CD4-positive, alpha-beta memory T cell (primary cell): ENCODE measurements at regions of chr1 and their contacts with region 1.

Region 1: GRCh38 chr1:27284425-27285273 is 37.3 kb upstream of the TMEM222 start:
- DNase-seq: peak; percentile 77 to 85 (median 81)
- H3K4me3 ChIP-seq: no peak overlapping the region
- H3K4me3 Mint-ChIP-seq: no peak overlapping the region
- H3K27ac ChIP-seq: no peak overlapping the region
- H3K27ac Mint-ChIP-seq: peak overlapping the region in 4 of 7 donors; percentile 42 to 73 (median 62)
- H3K4me1 ChIP-seq: no peaks in the 10 kb centered on the region
- H3K4me1 Mint-ChIP-seq: peaks cover 0 to 6% (median under 1%) of the 10 kb centered on the region in 4 donors
- H3K27me3 ChIP-seq: no peaks in the 10 kb centered on the region
- H3K27me3 Mint-ChIP-seq: no peaks in the 10 kb centered on the region

Region 2: GRCh38 chr1:27097484-27097917 is 187.1 kb before region 1 on chr1:
- CTCF ChIA-PET with region 1: interaction called, 145 read pairs
- POLR2A ChIA-PET with region 1: interaction called, 3 read pairs
- intact Hi-C with region 1: loop called (anchors 1 kb)
- DNase-seq: peak; percentile 64 to 72 (median 68)
- H3K4me3 ChIP-seq: no peak overlapping the region
- H3K4me3 Mint-ChIP-seq: no peak overlapping the region
- H3K27ac ChIP-seq: no peak overlapping the region
- H3K27ac Mint-ChIP-seq: peak overlapping the region in 1 of 7 donors; percentile 40
- H3K4me1 ChIP-seq: no peaks in the 10 kb centered on the region
- H3K4me1 Mint-ChIP-seq: peaks cover 0 to 4% (median 3%) of the 10 kb centered on the region in 4 donors
- H3K27me3 ChIP-seq: no peaks in the 10 kb centered on the region
- H3K27me3 Mint-ChIP-seq: no peaks in the 10 kb centered on the region

Region 3: DNA sequence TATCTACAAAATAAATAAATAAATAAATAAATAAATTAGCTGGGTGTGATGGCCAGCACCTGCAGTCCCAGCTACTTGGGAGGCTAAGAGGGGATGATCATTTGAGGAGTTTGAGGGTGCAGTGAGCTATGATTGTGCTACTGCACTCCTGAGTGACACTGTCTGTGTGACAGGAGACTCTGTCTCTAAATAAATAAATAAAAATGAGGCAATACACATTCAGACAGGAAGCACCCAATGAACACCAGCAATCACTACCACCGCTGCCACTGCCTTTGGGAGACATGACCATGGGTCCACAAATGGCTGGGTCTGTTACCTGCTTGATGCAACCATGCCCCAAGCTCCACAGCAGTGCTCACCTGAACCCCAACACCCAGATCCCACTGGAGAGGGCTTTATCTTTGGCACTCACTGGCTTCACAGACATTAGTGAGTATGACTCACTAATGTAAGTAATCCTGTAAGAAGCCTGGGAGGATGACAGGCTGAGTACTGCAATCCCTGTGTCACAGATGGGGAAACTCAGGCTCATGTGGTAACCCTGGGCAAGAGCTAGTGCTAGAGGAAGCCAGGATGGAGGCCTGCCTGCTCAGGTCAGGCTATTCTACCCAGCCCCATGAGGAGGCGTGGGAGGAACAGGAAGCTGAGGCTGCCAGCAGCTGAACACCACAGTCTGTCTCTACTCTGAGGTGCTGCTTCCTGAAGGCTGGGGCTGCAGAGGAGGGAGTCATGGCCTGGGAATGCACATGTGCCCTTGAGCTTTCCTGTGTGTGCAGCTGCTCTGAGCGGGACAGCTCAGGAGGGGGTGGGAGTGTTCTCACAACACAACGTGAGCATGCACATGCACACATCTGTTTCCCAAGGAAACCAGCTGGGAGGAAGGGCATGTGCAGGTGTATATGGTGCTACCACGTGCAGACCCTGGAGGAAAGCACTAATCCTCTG is 172.7 kb before region 1 on chr1:
- CTCF ChIA-PET with region 1: interaction called, 58 read pairs
- POLR2A ChIA-PET with region 1: interaction called, 4 read pairs
- intact Hi-C with region 1: loop called (anchors 1 kb)
- DNase-seq: peak; percentile 64 to 80 (median 69)
- H3K4me3 ChIP-seq: no peak overlapping the region
- H3K4me3 Mint-ChIP-seq: peak overlapping the region; percentile 21 to 83 (median 62)
- H3K27ac ChIP-seq: peak overlapping the region; percentile 48
- H3K27ac Mint-ChIP-seq: peak overlapping the region; percentile 74 to 90 (median 87)
- H3K4me1 ChIP-seq: peaks cover 31% of the 10 kb centered on the region
- H3K4me1 Mint-ChIP-seq: peaks cover 34 to 67% (median 51%) of the 10 kb centered on the region in 4 donors
- H3K27me3 ChIP-seq: no peaks in the 10 kb centered on the region
- H3K27me3 Mint-ChIP-seq: no peaks in the 10 kb centered on the region

Region 4: GRCh38 chr1:27201295-27201694 is 83.4 kb before region 1 on chr1:
- CTCF ChIA-PET with region 1: interaction called, 24 read pairs
- POLR2A ChIA-PET with region 1: interaction called, 3 read pairs
- intact Hi-C with region 1: loop called (anchors 1 kb)
- DNase-seq: no peak
- H3K4me3 ChIP-seq: no peak overlapping the region
- H3K4me3 Mint-ChIP-seq: no peak overlapping the region
- H3K27ac ChIP-seq: no peak overlapping the region
- H3K27ac Mint-ChIP-seq: no peak overlapping the region
- H3K4me1 ChIP-seq: peaks cover 6% of the 10 kb centered on the region
- H3K4me1 Mint-ChIP-seq: peaks cover 4 to 6% (median 5%) of the 10 kb centered on the region in 4 donors
- H3K27me3 ChIP-seq: no peaks in the 10 kb centered on the region
- H3K27me3 Mint-ChIP-seq: peaks cover 1 to 5% of the 10 kb centered on the region in 2 donors

Region 5: GRCh38 chr1:27218736-27219135 is 65.9 kb before region 1 on chr1:
- CTCF ChIA-PET with region 1: no interaction called
- POLR2A ChIA-PET with region 1: no interaction called
- intact Hi-C with region 1: no loop called
- DNase-seq: no peak
- H3K4me3 ChIP-seq: no peak overlapping the region
- H3K4me3 Mint-ChIP-seq: no peak overlapping the region
- H3K27ac ChIP-seq: no peak overlapping the region
- H3K27ac Mint-ChIP-seq: no peak overlapping the region
- H3K4me1 ChIP-seq: no peaks in the 10 kb centered on the region
- H3K4me1 Mint-ChIP-seq: peaks cover 0 to 5% (median under 1%) of the 10 kb centered on the region in 4 donors
- H3K27me3 ChIP-seq: no peaks in the 10 kb centered on the region
- H3K27me3 Mint-ChIP-seq: peaks cover 2 to 3% of the 10 kb centered on the region in 2 donors

Region 6: DNA sequence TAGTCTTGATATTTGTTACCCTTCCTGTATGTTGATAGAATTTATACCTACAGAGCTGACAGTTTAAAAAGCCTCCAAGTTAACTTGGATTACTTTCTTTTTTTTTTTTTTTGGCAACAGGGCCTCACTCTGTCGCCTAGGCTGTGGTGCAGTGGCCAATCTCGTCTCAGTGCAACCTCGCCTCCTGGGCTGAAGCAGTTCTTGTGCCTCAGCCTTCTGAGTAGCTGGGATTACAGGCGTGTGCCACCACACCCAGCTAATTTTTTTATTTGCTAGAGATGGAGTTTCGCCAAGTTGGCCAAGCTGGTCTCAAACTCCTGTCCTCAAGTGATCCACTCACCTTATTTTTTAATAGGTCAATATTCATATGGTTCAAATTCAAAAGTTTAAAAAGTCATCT is 17.5 kb before region 1 on chr1:
- CTCF ChIA-PET with region 1: interaction called, 12 read pairs
- POLR2A ChIA-PET with region 1: no interaction called
- intact Hi-C with region 1: no loop called
- DNase-seq: no peak
- H3K4me3 ChIP-seq: no peak overlapping the region
- H3K4me3 Mint-ChIP-seq: no peak overlapping the region
- H3K27ac ChIP-seq: no peak overlapping the region
- H3K27ac Mint-ChIP-seq: no peak overlapping the region
- H3K4me1 ChIP-seq: no peaks in the 10 kb centered on the region
- H3K4me1 Mint-ChIP-seq: peaks cover 0 to 2% (median 0%) of the 10 kb centered on the region in 4 donors
- H3K27me3 ChIP-seq: no peaks in the 10 kb centered on the region
- H3K27me3 Mint-ChIP-seq: no peaks in the 10 kb centered on the region

Region 7: DNA sequence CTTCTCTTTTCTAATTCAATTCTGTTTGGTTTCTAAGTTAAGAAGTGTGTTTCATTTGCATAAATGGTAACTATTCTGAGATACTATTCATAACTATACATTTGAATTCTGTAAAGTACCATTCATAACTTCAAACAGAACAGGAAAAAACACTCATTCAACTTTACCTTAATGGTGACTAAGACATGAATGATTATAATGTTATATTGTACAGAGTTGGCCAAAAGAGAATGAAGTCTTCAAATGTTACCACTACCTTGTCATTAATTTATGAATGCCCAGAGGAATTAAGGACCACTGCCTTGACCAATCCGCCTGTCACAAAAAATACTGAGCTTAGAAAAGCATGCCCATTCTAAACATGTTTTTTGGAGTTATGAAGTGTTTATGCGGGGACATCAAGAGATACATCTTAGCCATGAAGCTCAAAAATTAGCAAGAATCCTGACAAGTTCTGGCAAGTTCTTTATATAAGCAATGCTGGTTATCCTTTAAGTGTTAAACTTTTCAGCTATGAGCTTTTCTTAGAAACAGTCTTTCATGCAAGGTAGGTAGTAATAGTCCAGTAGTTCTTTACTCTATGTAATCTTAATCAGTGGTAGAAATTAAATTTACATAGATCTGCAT is 197.5 kb after region 1 on chr1:
- CTCF ChIA-PET with region 1: no interaction called
- POLR2A ChIA-PET with region 1: no interaction called
- intact Hi-C with region 1: no loop called
- DNase-seq: no peak
- H3K4me3 ChIP-seq: no peak overlapping the region
- H3K4me3 Mint-ChIP-seq: peak overlapping the region in 4 of 8 donors; percentile 2 to 45 (median 36)
- H3K27ac ChIP-seq: no peak overlapping the region
- H3K27ac Mint-ChIP-seq: peak overlapping the region in 3 of 7 donors; percentile 1 to 58 (median 20)
- H3K4me1 ChIP-seq: peaks cover 53% of the 10 kb centered on the region
- H3K4me1 Mint-ChIP-seq: peaks cover 33 to 66% (median 50%) of the 10 kb centered on the region in 4 donors
- H3K27me3 ChIP-seq: no peaks in the 10 kb centered on the region
- H3K27me3 Mint-ChIP-seq: no peaks in the 10 kb centered on the region

Region 8: GRCh38 chr1:27504588-27505419 is 220.2 kb after region 1 on chr1:
- CTCF ChIA-PET with region 1: no interaction called
- POLR2A ChIA-PET with region 1: no interaction called
- intact Hi-C with region 1: no loop called
- DNase-seq: no peak
- H3K4me3 ChIP-seq: no peak overlapping the region
- H3K4me3 Mint-ChIP-seq: no peak overlapping the region
- H3K27ac ChIP-seq: no peak overlapping the region
- H3K27ac Mint-ChIP-seq: no peak overlapping the region
- H3K4me1 ChIP-seq: no peaks in the 10 kb centered on the region
- H3K4me1 Mint-ChIP-seq: peaks cover 0 to 5% (median 0%) of the 10 kb centered on the region in 4 donors
- H3K27me3 ChIP-seq: no peaks in the 10 kb centered on the region
- H3K27me3 Mint-ChIP-seq: no peaks in the 10 kb centered on the region